ENCODE measurements at regions of chr11 and their contacts with region 1.

Region 1: GRCh38 chr11:112280268-112281126 is 19.8 kb upstream of the PLET1 start:
- DNase-seq: no peak
- H3K4me3 ChIP-seq: peak overlapping the region; percentile 57
- CTCF ChIP-seq: peak; percentile 84

Region 2: DNA sequence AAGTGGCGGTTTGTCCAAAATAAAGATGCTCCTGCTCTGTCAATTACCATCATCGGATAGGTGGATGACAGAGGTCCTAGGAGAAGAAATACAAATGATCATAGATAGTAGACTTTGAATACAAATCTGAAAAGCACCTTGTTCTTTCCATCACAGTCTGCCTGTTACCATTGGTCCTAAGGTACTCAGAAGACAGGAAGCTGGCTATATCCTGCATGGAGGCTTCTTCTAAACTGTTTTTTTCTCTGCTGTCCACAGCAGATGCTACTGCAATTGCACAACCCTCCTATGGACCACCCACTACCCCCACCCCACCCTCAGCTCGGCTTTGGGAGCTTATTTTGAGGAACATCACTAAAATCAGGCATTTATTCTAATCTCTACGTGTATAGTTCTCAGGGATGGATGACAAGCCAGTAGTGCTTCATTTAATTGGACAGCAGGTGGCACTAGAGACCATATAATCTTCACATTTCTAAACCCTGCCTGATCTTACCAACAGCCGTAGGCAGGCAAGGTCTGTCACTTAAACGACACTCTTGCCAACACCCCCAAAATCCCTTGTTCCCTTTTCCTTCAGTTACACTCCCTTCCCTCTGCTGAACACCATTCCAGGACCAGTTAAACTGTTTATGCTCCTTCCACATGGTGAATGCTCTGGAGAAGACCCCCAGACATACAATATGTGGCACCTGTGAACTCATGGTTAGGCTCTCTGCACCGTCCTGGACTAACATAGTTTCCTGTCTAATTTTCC is 60.8 kb before region 1 on chr11:
- CTCF ChIA-PET with region 1: interaction called, 970 read pairs
- POLR2A ChIA-PET with region 1: interaction called, 3 read pairs
- DNase-seq: no peak
- H3K4me3 ChIP-seq: no peak overlapping the region
- CTCF ChIP-seq: peak; percentile 50

Region 3: DNA sequence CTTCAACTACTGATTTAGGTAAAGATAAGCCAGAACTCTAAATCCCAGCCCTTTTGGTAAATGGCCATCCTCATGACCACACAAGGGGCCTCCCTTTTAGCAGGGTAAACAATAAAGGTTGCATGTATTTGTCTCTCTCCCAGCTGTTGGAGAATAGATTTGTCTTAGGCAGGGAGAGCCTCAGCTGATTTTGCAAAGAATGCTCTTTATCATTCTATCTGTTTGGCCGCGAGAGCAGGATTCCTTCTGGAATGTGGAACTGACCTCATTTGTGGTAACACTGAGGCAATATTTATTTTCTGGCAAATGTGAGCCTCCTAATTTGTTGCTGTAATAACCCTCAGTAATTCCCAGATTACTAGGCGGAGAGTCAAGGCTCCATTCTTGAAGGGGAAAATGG is 39.0 kb before region 1 on chr11:
- CTCF ChIA-PET with region 1: interaction called, 11 read pairs
- POLR2A ChIA-PET with region 1: no interaction called
- DNase-seq: peak; percentile 83
- H3K4me3 ChIP-seq: no peak overlapping the region
- CTCF ChIP-seq: no peak

Region 4: GRCh38 chr11:112248201-112248600 is 32.3 kb before region 1 on chr11:
- CTCF ChIA-PET with region 1: interaction called, 13 read pairs
- POLR2A ChIA-PET with region 1: no interaction called
- DNase-seq: no peak
- H3K4me3 ChIP-seq: no peak overlapping the region
- CTCF ChIP-seq: no peak

Region 5: DNA sequence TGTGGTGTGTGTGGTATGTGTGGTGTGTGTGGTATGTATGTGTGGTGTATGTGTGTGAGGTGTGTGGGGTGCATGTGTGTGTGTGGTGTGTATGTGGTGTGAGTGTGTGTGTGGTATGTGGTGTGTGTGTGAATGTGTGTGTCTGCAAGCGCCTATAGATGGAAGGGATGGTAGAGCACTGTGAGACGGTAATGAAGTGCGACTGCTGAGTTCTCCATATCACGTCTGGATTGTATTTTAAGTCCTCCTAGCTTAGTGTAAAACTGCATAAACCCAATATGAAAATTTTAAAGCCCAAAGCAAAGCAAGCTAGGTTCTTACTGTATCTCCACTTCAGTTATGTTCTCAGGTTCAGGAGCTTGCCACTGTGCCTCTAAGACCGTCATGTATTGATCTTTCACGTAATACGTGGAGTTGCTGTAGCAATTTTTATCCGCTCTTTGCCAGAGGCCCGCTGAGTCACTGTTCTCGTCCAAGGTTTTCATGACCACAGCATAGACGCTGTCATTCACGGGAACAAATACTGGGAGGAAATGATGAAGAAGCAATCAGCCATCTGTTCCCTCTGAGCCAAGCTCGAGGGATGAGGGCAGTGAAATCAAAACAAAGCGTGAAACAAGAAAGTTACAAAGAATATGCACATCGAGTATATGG is 25.3 kb before region 1 on chr11:
- CTCF ChIA-PET with region 1: interaction called, 13 read pairs
- POLR2A ChIA-PET with region 1: no interaction called
- DNase-seq: no peak
- H3K4me3 ChIP-seq: no peak overlapping the region
- CTCF ChIP-seq: no peak

Region 6: DNA sequence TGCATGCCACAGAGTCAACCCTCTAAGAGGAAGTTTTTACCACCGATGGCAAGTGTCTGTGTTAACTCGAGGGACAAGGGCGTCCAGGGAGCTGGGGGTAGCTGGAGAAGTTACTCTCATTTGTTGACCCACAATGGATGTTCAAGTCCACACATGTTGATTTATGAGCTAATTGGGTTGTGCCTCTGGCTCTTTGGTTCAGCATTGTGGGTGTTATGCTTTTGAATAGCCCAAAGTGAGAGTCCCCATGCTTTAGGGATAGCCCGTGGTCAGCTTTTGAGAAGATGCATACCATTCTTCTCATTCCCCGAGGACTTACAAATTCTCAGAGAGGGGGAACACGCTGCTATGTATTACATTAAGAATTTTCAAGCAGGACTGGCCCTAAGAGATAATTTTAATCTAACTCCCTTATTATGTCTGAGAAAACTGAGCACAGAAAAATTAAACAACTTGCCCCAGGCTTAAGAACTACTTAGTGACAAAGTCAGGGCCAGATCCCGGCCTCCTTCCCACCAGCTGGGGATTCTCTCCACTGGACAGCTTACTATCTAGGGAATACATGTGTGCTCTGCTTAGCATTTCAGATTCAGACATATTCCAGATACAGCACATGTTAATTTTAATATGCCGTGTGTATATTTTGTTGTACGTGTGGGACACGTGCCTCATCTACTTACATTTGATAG is 14.6 kb before region 1 on chr11:
- CTCF ChIA-PET with region 1: interaction called, 139 read pairs
- POLR2A ChIA-PET with region 1: no interaction called
- DNase-seq: peak; percentile 42
- H3K4me3 ChIP-seq: no peak overlapping the region
- CTCF ChIP-seq: no peak

Region 7: DNA sequence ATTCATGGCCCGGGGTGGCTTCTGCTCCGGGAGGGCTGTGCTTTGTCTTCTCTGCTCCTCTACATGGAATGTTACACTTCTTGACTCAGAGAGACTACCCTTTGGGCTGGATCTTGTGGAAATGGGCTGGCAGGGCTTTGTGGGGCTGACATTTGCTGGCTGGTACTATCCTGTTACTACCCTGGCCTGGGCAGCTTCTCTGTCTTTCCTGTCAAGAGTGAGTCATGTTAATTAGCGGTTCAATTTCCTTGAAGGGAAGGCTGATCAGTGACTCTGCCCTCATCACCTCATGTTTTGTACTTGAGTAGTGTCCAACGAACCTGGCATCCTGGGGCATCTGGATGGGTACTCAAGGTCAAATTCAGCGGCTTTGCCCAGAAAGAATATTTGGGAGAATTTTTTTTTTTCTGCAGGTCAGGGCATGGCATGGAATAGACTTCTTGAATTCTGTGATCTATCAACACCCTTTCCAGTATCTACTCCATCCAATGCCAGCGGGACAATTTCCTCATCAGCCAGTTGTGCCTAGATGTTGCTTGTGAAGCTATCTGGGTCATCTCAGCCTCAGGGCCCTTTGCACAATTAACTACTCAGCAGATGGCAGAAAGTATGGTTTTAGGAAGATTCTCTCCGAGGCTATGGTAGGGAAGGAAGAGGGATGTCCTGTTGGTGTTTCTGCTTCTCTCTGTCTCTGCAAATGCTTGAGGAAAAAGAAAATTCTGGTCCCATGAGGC is 120.7 kb after region 1 on chr11:
- CTCF ChIA-PET with region 1: no interaction called
- POLR2A ChIA-PET with region 1: no interaction called
- DNase-seq: no peak
- H3K4me3 ChIP-seq: no peak overlapping the region
- CTCF ChIP-seq: no peak

Region 8: GRCh38 chr11:113289431-113290187 is 1009.1 kb after region 1 on chr11:
- CTCF ChIA-PET with region 1: interaction called, 27 read pairs
- POLR2A ChIA-PET with region 1: no interaction called
- DNase-seq: no peak
- H3K4me3 ChIP-seq: no peak overlapping the region
- CTCF ChIP-seq: peak; percentile 94